Endothelial cell of umbilical vein (primary cell): ENCODE measurements at regions of chr1 and their contacts with region 1.

Region 1: DNA sequence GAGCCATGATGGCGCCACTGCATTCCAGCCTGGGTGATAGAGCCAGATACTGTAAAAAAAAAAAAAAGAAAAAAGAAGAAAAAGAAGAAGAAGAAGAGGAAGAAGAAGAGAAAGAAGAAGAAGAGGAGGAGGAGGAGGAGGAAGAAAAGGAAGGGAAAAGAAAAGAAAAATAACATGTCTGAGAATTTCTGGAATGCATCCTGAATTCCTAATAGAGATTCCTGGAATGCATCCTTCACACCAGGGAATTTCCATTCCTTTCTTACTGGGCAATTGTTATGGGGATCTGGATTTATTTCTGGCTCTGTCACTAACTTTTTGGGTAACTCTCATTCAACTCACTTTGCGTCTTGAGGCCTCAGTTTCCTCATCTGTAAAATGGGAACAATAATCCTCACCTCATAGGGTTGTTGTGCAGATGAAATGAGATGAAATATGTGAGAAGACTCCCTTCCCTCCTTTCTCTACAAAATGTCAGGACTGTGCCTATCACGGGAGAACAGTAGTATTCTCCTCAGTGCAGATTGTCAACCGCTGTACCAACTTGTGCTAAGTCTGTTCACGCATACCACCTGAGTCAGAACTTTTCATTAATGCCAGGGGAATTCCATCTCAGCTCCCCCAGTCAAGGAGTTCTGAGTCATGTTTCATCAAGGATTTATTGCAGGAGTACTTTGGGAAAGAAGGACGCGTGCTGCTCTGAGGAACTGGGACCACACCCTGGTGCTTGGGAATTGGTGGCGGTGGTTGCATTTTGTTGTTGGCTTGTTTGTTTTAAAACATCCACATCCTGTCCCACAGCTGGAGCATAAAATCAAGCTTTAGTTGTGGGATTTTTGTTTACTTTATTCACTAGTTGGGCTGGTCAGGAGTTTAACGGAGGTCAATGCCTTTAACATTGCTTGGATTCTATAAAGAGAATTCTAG is 42.4 kb upstream of the ROR1 start:
- DNase-seq: peak; percentile 88
- H3K4me3 ChIP-seq: no peak overlapping the region
- H3K27ac ChIP-seq: peak overlapping the region; percentile 69
- H3K4me1 ChIP-seq: peaks cover 12% of the 10 kb centered on the region
- H3K27me3 ChIP-seq: no peaks in the 10 kb centered on the region
- CTCF ChIP-seq: no peak
- POLR2A ChIP-seq: no peak

Region 2: DNA sequence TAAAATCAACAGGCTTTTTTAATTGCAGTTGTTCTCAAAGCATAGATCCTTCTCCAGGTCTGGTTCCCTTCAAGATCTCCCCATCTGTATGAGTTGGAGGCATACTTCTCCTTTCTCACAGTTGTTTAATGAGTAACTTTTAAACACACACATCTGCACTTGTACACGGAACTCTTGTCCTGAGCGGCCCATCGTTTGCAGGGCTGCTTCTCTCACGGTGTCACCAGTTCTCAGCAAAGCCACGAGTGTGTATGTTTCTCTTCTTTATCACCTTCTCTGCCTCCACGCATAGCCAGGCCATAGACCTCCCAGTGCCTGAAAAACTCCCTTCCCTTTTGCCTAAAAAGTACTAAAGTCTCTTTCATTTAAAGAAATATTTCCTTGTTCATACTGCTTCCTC is 26.3 kb before region 1 on chr1:
- CTCF ChIA-PET with region 1: no interaction called
- POLR2A ChIA-PET with region 1: no interaction called
- dilution Hi-C with region 1: no loop called
- intact Hi-C with region 1: loop called (anchors 2 kb)
- DNase-seq: no peak
- H3K4me3 ChIP-seq: no peak overlapping the region
- H3K27ac ChIP-seq: no peak overlapping the region
- H3K4me1 ChIP-seq: peaks cover 16% of the 10 kb centered on the region
- H3K27me3 ChIP-seq: peaks cover 0 to 5% of the 10 kb centered on the region in 2 experiments
- CTCF ChIP-seq: no peak
- POLR2A ChIP-seq: no peak

Region 3: DNA sequence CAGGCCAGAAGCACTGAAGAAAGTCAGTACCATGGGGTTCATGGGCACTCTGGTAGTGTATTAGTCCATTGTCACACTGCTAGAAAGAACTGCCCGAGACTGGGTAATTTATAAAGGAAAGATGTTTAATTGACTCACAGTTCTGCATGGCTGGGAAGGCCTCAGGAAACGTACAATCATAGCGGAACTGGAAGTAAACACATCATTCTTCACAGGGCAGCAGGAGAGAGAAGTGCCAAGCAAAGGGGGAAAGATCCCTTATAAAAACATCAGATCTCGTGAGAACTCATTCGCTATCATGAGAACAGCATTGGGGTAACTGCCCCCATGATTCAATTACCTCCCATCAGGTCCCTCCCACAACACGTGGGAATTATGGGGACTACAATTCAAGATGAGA is 22.2 kb after region 1 on chr1:
- CTCF ChIA-PET with region 1: no interaction called
- POLR2A ChIA-PET with region 1: interaction called, 6 read pairs
- dilution Hi-C with region 1: no loop called
- intact Hi-C with region 1: loop called (anchors 1 kb)
- DNase-seq: peak; percentile 78
- H3K4me3 ChIP-seq: no peak overlapping the region
- H3K27ac ChIP-seq: peak overlapping the region; percentile 60
- H3K4me1 ChIP-seq: peaks cover 21% of the 10 kb centered on the region
- H3K27me3 ChIP-seq: peaks cover 0 to 3% of the 10 kb centered on the region in 2 experiments
- CTCF ChIP-seq: no peak
- POLR2A ChIP-seq: no peak

Region 4: DNA sequence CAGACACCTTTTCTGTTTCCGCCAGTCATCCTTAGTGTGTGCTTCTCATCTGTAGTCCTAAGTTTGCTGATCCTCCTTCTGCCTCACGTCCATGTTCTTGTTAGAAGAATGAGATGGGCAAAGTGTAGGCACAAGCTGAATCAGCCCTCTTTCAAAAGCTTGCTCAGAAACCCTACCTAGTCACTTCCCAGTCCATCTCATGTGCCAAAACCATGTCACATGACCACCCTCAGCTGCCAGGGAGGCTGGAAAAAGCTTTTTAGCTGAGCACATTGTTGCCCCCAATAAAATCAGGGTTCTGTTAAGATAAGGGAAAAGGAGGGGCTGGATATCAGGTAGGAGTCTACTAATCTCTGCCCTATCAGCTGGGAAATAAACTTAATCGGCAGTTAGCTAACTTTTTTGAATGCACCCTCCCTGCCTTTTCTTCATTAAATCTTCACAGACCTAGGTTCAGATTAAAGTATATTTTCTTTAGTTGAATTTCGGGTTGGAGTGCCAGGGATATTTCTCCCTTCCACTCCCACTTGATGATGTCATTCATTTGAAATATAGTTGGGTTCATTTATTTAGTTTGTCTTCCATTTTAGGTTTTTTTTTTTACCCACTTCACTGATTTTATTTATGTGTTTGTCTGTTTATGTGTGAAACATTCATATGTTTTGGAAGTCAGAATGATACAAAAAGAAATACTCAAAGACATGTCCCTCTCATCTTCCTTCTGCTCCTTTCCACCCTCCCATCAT is 171.6 kb after region 1 on chr1:
- CTCF ChIA-PET with region 1: no interaction called
- POLR2A ChIA-PET with region 1: no interaction called
- dilution Hi-C with region 1: no loop called
- intact Hi-C with region 1: no loop called
- DNase-seq: no peak
- H3K4me3 ChIP-seq: no peak overlapping the region
- H3K27ac ChIP-seq: no peak overlapping the region
- H3K4me1 ChIP-seq: peaks cover 4% of the 10 kb centered on the region
- H3K27me3 ChIP-seq: no peaks in the 10 kb centered on the region
- CTCF ChIP-seq: no peak
- POLR2A ChIP-seq: no peak